ENCODE measurements at regions of chr3 and their contacts with region 1.

Region 1: DNA sequence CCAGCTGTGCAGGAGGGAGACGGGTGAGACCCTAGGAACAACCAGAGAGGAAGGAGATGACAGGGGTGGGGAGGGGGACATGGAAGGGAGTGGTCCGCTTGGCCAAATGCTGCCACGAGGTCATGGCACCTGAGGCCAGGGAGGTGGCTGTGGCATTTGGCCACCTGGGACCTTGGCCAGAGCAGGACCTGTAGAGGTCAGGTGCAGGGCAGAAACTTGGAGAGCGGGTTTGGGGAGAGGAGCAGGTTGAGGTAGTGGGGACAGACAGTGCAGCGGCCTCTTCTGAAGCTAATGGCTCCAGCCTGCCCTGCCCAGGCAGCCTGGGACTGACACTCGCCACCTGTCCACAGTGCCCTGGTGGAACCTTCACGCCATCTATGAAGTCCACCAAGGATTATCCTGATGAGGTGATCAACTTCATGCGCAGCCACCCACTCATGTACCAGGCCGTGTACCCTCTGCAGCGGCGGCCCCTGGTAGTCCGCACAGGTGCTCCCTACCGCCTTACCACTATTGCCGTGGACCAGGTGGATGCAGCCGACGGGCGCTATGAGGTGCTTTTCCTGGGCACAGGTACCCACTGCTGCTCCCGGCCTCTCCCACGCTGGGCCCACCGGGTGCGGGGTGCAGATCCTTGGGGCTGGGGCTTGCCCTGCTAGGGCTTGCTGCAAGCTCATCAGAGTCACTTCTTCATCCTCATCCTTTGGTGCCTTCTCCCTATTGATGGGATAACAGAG is 7.0 kb upstream of the GNAT1 start:
- DNase-seq: peak; percentile 76 to 83
- H3K4me3 ChIP-seq: no peak overlapping the region
- H3K27ac ChIP-seq: no peak overlapping the region
- H3K4me1 ChIP-seq: peaks cover 16% of the 10 kb centered on the region
- H3K27me3 ChIP-seq: no peaks in the 10 kb centered on the region
- CTCF ChIP-seq: no peak

Region 2: DNA sequence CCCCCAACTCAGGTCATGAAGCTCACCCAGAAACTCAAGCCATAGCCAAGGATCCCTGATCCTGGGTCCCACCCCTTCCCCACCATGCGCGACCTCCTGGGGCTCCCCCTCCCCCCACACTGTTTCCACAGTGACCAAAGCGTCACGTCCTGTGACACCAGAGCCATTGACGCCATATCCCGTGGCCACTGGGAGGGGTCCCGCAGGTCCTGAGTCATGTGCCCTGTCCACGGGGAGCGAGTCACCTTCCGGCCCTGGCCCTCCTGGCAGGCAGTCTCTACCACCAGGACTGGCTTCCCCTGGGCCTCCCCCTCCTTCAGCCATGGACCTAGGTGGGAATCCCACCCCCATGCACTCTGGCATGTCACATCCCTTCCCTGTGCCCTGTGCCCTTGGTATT is 13.7 kb before region 1 on chr3:
- CTCF ChIA-PET with region 1: no interaction called
- POLR2A ChIA-PET with region 1: no interaction called
- intact Hi-C with region 1: loop called (anchors 2 kb)
- DNase-seq: peak in 1 of 2 experiments; percentile 66
- H3K4me3 ChIP-seq: no peak overlapping the region
- H3K27ac ChIP-seq: no peak overlapping the region
- H3K4me1 ChIP-seq: peaks cover 15% of the 10 kb centered on the region
- H3K27me3 ChIP-seq: no peaks in the 10 kb centered on the region
- CTCF ChIP-seq: no peak

Region 3: GRCh38 chr3:50205414-50206276 is 21.2 kb after region 1 on chr3:
- CTCF ChIA-PET with region 1: no interaction called
- POLR2A ChIA-PET with region 1: no interaction called
- intact Hi-C with region 1: no loop called
- DNase-seq: peak in 1 of 2 experiments; percentile 52
- H3K4me3 ChIP-seq: no peak overlapping the region; the same call in 1 of the 2 replicates
- H3K27ac ChIP-seq: no peak overlapping the region
- H3K4me1 ChIP-seq: no peaks in the 10 kb centered on the region; the same call in 1 of the 2 replicates
- H3K27me3 ChIP-seq: peaks cover 21% of the 10 kb centered on the region; the same call in 1 of the 2 replicates
- CTCF ChIP-seq: no peak

Measured in PC-9 (cell line).